Tibial artery (tissue), 4 donors: ENCODE measurements at regions of chr6 and their contacts with region 1.

Region 1: DNA sequence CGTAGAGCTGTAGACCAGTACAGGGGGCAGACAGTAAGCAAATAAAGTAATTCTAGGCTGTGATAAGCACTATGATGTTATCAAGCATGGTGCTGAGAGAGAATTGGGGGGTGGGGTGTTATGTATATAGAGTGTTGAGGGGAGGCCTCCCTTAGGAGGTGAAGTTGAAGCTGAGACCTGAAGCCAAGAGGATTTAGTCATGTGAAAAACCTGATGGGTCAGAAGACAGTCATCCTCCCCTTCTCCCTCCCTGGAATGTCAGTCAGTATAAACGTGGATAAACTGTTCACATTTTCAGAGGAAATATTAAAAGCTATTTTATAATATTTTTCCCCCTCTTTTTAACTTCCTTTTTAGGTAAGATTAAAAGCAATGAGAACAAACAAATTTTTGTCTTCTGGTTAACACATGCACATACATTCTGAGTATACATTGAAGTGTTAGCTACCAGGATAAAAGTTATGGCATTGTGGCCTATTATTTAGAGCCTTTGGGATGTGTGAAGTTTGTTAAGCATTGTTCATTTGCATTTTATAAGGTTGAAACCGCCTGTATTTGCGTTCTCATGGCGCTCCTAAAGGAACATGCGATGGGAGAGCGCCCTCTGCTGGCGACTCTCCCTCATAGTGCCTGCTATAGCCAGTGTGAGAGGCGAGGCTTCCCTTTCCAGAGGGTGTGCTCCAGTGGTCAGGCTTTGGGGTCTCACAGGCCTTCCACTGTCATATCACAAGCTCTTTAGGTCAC is 35.4 kb upstream of the MAPK13 start:
- DNase-seq: peak; percentile 84 to 86
- H3K4me3 ChIP-seq: no peak overlapping the region
- H3K27ac ChIP-seq: peak overlapping the region; percentile 27 to 40
- H3K4me1 ChIP-seq: peaks cover 0 to 9% (median 4%) of the 10 kb centered on the region in 4 donors
- H3K27me3 ChIP-seq: no peaks in the 10 kb centered on the region
- CTCF ChIP-seq: peak; percentile 93 to 97

Region 2: DNA sequence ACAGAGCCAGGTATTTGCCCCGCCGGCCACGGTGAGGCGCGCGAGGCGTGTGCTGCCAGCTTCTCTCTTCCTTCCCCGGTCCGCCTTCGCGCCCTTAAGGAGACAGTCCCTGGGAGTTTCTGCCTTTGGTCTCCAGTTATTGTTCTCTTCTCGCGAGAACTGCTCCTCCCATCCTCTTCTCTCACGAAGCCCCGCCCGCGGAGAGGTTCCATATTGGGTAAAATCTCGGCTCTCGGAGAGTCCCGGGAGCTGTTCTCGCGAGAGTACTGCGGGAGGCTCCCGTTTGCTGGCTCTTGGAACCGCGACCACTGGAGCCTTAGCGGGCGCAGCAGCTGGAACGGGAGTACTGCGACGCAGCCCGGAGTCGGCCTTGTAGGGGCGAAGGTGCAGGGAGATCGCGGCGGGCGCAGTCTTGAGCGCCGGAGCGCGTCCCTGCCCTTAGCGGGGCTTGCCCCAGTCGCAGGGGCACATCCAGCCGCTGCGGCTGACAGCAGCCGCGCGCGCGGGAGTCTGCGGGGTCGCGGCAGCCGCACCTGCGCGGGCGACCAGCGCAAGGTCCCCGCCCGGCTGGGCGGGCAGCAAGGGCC is 67.3 kb before region 1 on chr6 and contains the start of gene MAPK14:
- intact Hi-C with region 1: loop called (anchors 1 kb)
- DNase-seq: peak; percentile 100
- H3K4me3 ChIP-seq: peak within 1 kb of the TSS; percentile 93 to 94
- H3K27ac ChIP-seq: peak within 1 kb of the TSS; percentile 85 to 87
- H3K4me1 ChIP-seq: peaks cover 0 to 49% (median 11%) of the 10 kb centered on the region in 4 donors
- H3K27me3 ChIP-seq: peaks cover 0 to 10% of the 10 kb centered on the region in 2 donors
- CTCF ChIP-seq: peak; percentile 90 to 98